ENCODE measurements at regions of chr17 and their contacts with region 1.

Region 1: DNA sequence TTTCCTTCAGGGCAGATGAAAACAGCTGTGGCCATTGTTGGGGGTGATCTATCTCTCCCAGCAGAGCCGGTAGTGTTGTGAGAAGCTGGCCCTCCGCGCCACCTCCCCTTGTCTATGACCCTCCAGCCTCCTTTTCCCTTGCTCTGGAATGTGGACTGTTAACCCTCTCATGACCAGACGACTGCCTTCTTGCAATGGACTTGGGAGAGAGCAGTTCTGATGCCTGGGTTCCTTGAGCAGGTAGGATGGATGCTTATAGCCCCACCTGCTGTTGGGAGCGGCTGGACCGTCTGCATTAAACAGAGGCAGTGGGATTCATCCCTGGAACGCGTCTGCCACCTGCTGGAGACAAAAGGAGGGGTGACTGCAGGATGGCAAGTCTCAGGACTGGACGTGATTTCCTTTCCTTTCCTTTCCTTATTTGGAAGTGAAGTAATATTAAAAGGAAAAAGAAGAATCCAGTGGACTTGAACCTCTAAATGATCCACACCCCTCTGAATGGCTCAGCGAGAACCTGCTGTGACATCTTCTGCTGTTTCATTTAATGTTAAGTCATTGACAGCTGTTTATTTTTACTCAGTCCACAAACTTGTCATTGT is 1.8 kb upstream of the SOST start:
- DNase-seq: peak; percentile 90
- CTCF ChIP-seq: peak; percentile 100

Region 2: DNA sequence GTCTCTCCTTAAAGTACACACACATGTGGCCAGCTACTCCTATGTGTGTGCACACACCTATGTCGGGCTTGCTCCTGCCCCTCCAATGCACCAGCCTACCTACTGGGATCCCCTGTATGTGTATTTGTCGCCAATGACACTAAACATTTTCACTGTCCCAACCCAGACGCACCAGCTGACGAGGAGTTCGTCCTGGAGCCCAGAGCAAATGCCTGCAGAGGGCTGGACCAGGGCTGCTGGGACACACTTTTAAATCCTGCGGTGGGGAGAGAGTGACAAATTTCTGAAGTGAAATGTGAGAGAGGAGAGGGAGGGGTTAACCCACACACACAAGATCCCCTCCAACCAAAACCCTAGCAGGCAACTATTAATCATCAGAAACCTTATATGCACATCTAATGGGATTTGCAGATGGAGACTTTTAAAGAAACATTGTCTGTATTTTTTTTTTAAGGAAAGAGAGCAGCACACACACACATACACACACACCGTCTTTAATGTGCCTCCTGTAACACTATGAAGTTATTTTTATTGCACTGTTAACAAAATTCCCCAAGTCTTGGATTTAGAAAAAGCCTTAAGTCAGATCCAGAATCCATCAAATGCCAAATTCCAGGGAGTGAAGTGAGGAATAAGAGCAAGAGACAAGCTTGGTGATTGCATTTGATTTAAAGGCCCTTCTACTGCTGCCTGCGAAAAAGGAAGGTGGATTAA is 98.5 kb before region 1 on chr17 and contains the start of gene MEOX1:
- CTCF ChIA-PET with region 1: no interaction called
- POLR2A ChIA-PET with region 1: no interaction called
- DNase-seq: peak; percentile 42
- CTCF ChIP-seq: no peak

Region 3: GRCh38 chr17:43673516-43674323 is 86.6 kb before region 1 on chr17:
- CTCF ChIA-PET with region 1: interaction called, 14 read pairs
- POLR2A ChIA-PET with region 1: no interaction called
- DNase-seq: peak; percentile 70
- CTCF ChIP-seq: peak; percentile 85

Region 4: GRCh38 chr17:43683928-43684653 is 76.3 kb before region 1 on chr17:
- CTCF ChIA-PET with region 1: interaction called, 503 read pairs
- POLR2A ChIA-PET with region 1: no interaction called
- DNase-seq: no peak
- CTCF ChIP-seq: no peak

Region 5: DNA sequence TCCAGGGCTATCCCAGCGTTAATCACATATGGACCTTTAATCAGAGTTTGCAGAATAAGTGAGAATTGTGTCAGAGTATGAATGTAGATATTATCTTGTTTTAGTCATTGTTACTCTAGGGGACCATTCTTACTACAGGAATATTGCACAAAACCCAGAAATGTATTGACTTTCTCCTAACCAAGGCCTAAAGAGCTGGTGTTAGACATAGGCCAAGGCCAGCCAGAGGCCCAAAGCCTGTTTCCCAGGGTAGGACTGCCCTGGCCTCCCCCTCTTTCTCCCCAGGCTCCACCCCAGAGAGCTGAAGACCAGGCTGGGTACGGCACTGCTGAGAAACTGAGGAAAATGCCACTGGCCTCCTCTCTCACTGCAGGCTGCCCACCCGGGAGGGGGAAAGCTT is 56.7 kb before region 1 on chr17:
- CTCF ChIA-PET with region 1: interaction called, 503 read pairs
- POLR2A ChIA-PET with region 1: no interaction called
- DNase-seq: no peak
- CTCF ChIP-seq: no peak

Region 6: DNA sequence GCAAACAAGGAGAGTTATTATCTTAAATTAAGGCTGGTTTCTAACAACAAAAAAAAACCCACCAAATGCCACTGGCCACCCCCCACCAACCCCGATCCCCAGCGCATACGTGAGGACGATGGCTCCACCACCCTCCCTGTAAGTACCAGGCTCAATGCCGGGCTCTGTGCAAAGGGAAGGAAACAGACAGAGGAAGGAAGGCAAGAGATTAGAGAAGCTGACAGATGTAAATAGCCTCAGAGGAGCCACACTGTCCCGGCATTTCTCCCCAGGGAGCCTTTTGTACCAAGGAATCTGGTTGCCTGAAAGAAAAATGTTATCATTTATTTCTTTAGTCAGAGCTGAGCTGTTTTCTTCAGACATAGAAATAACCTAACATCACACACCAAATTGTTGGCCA is 14.8 kb before region 1 on chr17:
- CTCF ChIA-PET with region 1: interaction called, 33 read pairs
- POLR2A ChIA-PET with region 1: no interaction called
- DNase-seq: no peak
- CTCF ChIP-seq: no peak